Astrocyte of the cerebellum (primary cell): ENCODE measurements at regions of chr15 and their contacts with region 1.

Region 1: GRCh38 chr15:101112336-101113113 is 139.3 kb downstream of the CHSY1 start:
- DNase-seq: no peak
- H3K4me3 ChIP-seq: no peak overlapping the region
- CTCF ChIP-seq: no peak

Region 2: GRCh38 chr15:101056366-101057334 is 55.9 kb before region 1 on chr15:
- in situ Hi-C with region 1: no loop called
- DNase-seq: no peak
- H3K4me3 ChIP-seq: no peak overlapping the region
- CTCF ChIP-seq: no peak

Region 3: GRCh38 chr15:101156509-101157159 is 44.1 kb after region 1 on chr15:
- in situ Hi-C with region 1: loop called (anchors 5 kb)
- DNase-seq: no peak
- H3K4me3 ChIP-seq: no peak overlapping the region
- CTCF ChIP-seq: no peak

Region 4: GRCh38 chr15:101193120-101193644 is 80.7 kb after region 1 on chr15:
- in situ Hi-C with region 1: loop called (anchors 5 kb)
- DNase-seq: no peak
- H3K4me3 ChIP-seq: no peak overlapping the region
- CTCF ChIP-seq: no peak

Region 5: DNA sequence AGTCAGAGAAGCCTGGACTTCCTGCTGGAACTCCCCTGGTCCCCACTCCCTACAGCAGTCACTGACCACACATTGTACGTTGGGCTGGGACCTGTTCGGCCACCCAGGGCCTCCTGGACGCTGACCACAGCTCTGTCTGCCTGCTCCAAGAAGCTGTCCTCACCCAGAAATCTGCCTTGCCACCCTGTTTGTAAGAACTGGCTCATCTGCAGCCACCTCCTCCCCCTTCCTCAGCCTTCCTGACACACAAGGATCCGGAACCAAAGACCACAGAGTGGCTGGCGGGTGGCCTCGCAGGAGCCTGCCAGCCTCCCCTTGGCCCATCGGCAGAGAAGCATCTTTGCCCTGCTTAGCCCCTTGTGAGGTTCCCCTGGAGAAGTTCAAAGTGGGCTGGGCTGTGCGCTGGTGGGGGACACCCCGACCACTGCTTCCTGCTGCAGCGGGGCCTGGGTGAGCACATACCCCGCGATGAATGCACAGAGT is 285.0 kb after region 1 on chr15:
- in situ Hi-C with region 1: no loop called
- DNase-seq: no peak
- H3K4me3 ChIP-seq: no peak overlapping the region
- CTCF ChIP-seq: no peak